ENCODE measurements at regions of chr17 and their contacts with region 1.

Region 1: DNA sequence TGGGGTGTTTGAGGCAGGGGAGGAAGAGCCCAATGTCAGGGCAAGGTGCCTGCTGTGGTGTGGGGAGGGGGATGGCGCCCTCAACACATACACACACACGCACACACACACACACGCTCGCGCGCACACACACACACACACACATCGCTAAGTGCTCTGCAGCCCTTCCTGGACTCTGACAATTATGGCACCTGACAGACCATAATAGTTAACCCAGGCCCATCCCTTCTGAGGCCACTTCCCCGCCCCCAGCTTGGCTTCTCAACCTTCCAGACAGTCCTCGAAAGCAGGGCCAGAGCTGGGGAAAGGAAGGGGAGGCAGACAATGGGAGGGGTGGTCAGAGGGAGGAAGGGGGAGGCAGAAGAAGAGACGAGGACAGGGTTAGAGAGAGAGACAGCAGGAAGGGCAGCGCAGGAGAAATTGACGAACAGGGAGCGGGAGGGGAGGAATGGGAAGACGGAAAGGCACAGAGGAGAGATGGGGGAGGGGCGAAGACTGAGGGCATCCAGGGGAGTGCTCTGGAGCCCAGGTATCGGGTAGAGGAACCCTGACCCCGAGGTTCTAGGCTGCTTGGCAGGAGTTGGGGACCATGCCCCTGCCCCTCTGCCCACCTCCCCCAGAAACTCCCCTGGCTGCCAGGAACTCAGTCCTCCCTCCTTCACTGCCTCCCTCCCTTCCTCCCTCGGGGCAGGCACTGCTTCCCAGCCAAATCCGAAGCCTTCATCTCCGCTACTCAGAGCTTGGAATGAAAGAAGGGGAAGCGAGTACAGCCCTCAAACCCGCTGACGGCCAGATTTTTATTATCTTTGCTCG is 4.0 kb downstream of the SRCIN1 start:
- DNase-seq: no peak
- H3K27ac ChIP-seq: no peak overlapping the region
- CTCF ChIP-seq: no peak

Region 2: GRCh38 chr17:38656959-38657823 is 55.4 kb after region 1 on chr17:
- CTCF ChIA-PET with region 1: no interaction called
- POLR2A ChIA-PET with region 1: interaction called, 11 read pairs
- DNase-seq: no peak
- H3K27ac ChIP-seq: no peak overlapping the region
- CTCF ChIP-seq: no peak

Region 3: GRCh38 chr17:38674749-38675615 is 73.2 kb after region 1 on chr17 and contains the start of gene EPOP:
- CTCF ChIA-PET with region 1: no interaction called
- POLR2A ChIA-PET with region 1: no interaction called
- DNase-seq: peak; percentile 91
- H3K27ac ChIP-seq: peak within 1 kb of the TSS; percentile 48
- CTCF ChIP-seq: 0 out of 2 replicates have a peak, but pooled peaks have one; percentile 1

Measured in RWPE1 (cell line).